Panc1 (cell line): ENCODE measurements at regions of chr11 and their contacts with region 1.

Region 1: DNA sequence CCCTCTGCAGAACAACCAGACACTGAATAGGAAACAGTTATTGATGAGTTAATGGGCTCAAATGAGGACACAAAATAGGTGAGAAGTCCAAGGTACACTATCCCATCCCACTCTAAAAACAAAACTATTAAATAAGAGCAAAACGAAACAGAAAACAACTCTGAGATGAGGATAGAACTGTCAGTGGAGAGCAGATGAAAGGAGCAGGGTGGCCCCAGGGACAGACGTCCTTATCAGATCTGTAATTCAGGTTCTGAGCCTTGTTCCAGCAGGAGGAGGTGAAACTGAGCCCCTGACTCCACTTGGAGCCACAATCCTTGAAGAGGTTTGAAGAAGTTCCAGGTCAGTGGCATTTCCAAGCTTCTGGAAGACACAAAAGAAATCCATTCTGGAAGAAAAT is 8.5 kb upstream of the SNX19 start:
- DNase-seq: no peak
- ATAC-seq: no peak
- H3K4me3 ChIP-seq: no peak overlapping the region
- H3K27ac ChIP-seq: no peak overlapping the region
- H3K4me1 ChIP-seq: no peaks in the 10 kb centered on the region
- H3K27me3 ChIP-seq: peaks cover 11% of the 10 kb centered on the region; the same call in 1 of the 2 replicates
- CTCF ChIP-seq: no peak

Region 2: GRCh38 chr11:130979386-130979972 is 54.7 kb after region 1 on chr11:
- CTCF ChIA-PET with region 1: interaction called, 4 read pairs
- POLR2A ChIA-PET with region 1: no interaction called
- in situ Hi-C with region 1: no loop called
- intact Hi-C with region 1: loop called (anchors 5 kb)
- DNase-seq: no peak
- ATAC-seq: 0 out of 2 replicates have a peak, but pooled peaks have one; percentile 73
- H3K4me3 ChIP-seq: no peak overlapping the region
- H3K27ac ChIP-seq: no peak overlapping the region
- H3K4me1 ChIP-seq: no peaks in the 10 kb centered on the region
- H3K27me3 ChIP-seq: peaks cover 2% of the 10 kb centered on the region
- CTCF ChIP-seq: peak; percentile 70

Region 3: GRCh38 chr11:131038597-131038996 is 113.8 kb after region 1 on chr11:
- CTCF ChIA-PET with region 1: no interaction called
- POLR2A ChIA-PET with region 1: no interaction called
- in situ Hi-C with region 1: no loop called
- intact Hi-C with region 1: loop called (anchors 5 kb)
- DNase-seq: no peak
- ATAC-seq: peak; percentile 76; the same call in 1 of the 2 replicates
- H3K4me3 ChIP-seq: no peak overlapping the region
- H3K27ac ChIP-seq: no peak overlapping the region
- H3K4me1 ChIP-seq: no peaks in the 10 kb centered on the region
- H3K27me3 ChIP-seq: peaks cover 8% of the 10 kb centered on the region
- CTCF ChIP-seq: peak; percentile 42

Region 4: DNA sequence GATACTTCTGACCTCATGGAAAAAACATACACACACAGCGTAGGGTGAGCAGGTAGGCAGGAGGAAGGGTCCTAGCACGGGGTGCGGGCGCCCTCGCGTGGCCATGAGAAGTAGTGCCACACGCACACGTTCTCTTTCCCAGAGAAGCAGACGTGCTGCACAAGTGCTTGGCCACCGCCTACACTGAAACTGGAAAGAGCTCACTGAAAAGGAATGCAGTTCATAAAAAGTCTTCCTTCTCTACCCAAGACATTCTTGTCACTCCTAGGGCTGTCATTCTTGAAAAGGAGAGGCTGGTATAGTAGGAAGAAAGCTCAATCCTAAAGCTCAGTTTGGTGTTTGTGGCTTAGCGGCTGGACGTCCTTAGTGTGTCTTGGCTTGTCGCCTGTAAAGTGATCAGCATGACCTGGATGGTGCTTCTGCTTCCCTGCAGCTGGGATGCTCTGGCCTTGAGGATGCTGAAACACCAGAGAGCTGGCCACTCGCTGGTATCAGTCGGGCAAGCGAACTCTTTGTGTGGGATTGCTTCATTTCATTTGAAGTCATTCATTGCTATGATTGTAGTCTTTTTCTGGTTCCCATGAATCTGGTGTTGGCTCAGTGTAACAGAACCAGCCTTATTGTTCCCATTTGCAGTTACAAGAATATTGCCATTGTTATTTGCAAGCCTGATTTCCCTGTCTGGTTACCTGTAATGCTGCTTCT is 749.4 kb after region 1 on chr11:
- CTCF ChIA-PET with region 1: no interaction called
- POLR2A ChIA-PET with region 1: no interaction called
- in situ Hi-C with region 1: no loop called
- intact Hi-C with region 1: loop called (anchors 2 kb)
- DNase-seq: peak; percentile 47
- ATAC-seq: peak; percentile 92
- H3K4me3 ChIP-seq: no peak overlapping the region
- H3K27ac ChIP-seq: no peak overlapping the region
- H3K4me1 ChIP-seq: no peaks in the 10 kb centered on the region
- H3K27me3 ChIP-seq: peaks cover 11% of the 10 kb centered on the region
- CTCF ChIP-seq: peak; percentile 99